AG04450 (cell line): ENCODE measurements at regions of chr14 and their contacts with region 1.

Region 1: DNA sequence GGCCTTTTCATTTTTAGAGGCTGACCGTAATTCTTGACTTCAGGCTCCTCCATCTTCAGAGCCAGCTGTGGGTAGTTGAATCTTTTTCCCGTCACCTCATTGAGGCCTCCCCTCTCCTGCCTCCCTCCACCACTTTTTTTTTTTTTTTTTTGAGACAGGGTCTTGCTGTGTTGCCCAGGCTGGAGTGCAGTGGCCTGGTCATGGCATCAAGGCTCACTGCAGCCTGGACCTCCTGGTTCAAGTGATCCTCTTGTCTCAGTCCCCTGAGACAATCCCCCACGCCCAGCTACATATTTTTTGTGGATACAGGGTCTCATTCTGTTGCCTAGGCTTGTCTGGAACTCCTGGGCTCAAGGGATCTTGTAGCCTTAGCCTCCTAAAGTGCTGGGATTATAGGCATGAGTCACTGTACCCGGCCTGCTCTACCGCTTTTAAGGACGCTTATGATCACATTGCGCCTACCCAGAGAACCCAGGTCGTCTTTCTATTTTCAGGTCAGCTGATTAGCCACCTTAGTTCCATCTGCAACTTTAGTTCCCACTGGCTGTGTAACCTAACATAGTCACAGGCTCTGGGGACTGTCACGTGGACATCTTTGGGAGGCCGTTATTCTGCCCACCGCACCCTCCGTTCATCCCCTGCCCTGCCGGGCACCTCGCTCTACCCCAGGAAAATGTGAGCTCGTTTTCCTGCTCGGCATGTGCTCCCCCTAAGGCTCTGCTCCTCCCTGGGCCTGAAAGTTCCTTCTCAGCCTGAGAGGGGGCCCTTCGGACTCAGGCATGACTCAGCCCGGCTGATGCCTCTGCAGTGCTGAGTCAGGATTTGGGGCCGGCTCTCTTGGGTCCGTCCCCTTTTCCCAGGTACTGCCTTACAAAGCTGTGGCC is 13.4 kb downstream of the TNFAIP2 start:
- DNase-seq: no peak
- H3K4me3 ChIP-seq: no peak overlapping the region
- H3K27ac ChIP-seq: peak overlapping the region; percentile 52
- H3K27me3 ChIP-seq: no peaks in the 10 kb centered on the region
- CTCF ChIP-seq: no peak

Region 2: DNA sequence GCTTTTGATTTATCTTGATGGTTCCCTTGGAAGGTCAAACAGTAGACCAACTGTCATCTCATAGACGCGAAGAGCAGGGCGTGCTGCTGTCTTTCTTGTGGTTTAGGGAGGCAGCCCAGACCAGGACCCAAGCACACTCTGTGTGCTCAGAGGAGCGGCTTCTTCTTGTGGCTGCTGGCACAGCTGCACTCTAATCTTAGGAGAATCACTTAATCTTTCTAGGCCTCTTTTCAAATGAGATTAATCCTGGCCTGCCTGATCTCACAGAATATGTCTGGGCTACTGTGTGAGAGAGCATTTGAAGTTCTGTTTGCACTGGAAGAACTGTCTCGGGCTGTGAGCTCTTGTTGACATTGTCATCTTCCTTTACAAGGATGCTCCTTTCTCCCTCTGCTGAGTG is 419.4 kb before region 1 on chr14:
- CTCF ChIA-PET with region 1: interaction called, 13 read pairs
- POLR2A ChIA-PET with region 1: no interaction called
- DNase-seq: no peak
- H3K4me3 ChIP-seq: no peak overlapping the region
- H3K27ac ChIP-seq: no peak overlapping the region
- H3K27me3 ChIP-seq: no peaks in the 10 kb centered on the region
- CTCF ChIP-seq: no peak